ENCODE measurements at regions of chr9 and their contacts with region 1.

Region 1: GRCh38 chr9:79735023-79735722 is 163.4 kb downstream of the TLE4 start:
- DNase-seq: peak in 1 of 2 donors; percentile 16
- H3K4me3 ChIP-seq: no peak overlapping the region
- H3K27ac ChIP-seq: no peak overlapping the region
- H3K4me1 ChIP-seq: no peaks in the 10 kb centered on the region
- H3K27me3 ChIP-seq: no peaks in the 10 kb centered on the region
- CTCF ChIP-seq: no peak
- EP300 ChIP-seq: no peak
- POLR2A ChIP-seq: no peak

Region 2: GRCh38 chr9:80163889-80164288 is 428.7 kb after region 1 on chr9:
- intact Hi-C with region 1: loop called (anchors 5 kb)
- DNase-seq: no peak
- H3K4me3 ChIP-seq: no peak overlapping the region
- H3K27ac ChIP-seq: no peak overlapping the region
- H3K4me1 ChIP-seq: peaks cover 0 to 1% (median 0%) of the 10 kb centered on the region in 4 donors
- H3K27me3 ChIP-seq: no peaks in the 10 kb centered on the region
- CTCF ChIP-seq: no peak
- EP300 ChIP-seq: no peak
- POLR2A ChIP-seq: no peak

Measured in stomach (tissue), 19 donors.